GM10248 (cell line): ENCODE measurements at regions of chr5 and their contacts with region 1.

Region 1: GRCh38 chr5:134041570-134042411 is 37.0 kb upstream of the VDAC1 start:
- DNase-seq: peak; percentile 82
- CTCF ChIP-seq: no peak

Region 2: GRCh38 chr5:133977161-133977787 is 64.5 kb before region 1 on chr5:
- CTCF ChIA-PET with region 1: interaction called, 19 read pairs
- POLR2A ChIA-PET with region 1: no interaction called
- DNase-seq: peak; percentile 34
- CTCF ChIP-seq: no peak

Region 3: GRCh38 chr5:134018154-134018985 is 23.4 kb before region 1 on chr5:
- CTCF ChIA-PET with region 1: interaction called, 158 read pairs
- POLR2A ChIA-PET with region 1: no interaction called
- DNase-seq: no peak
- CTCF ChIP-seq: no peak

Region 4: GRCh38 chr5:134063188-134063820 is 21.5 kb after region 1 on chr5:
- CTCF ChIA-PET with region 1: interaction called, 38 read pairs
- POLR2A ChIA-PET with region 1: no interaction called
- DNase-seq: no peak
- CTCF ChIP-seq: no peak

Region 5: DNA sequence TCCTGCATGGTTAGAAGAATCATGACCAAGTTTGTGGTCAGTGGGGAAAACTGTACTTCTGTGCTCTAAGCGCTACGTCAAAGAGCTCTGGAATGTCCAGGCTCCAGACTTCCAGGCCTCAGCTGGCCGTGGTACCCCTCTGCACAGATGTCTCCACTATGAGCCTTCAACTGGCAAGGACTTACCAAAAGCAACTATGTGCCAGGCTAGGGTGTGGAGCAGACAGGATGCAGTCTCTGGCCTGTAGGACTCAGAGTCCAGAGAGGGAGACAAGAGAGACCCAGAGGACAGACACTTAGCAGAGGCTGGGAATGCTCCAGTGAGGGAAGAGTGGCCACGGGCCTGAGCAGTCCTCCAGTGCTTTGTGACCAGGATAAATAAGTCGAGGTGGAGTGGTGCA is 41.7 kb after region 1 on chr5:
- CTCF ChIA-PET with region 1: interaction called, 22 read pairs
- POLR2A ChIA-PET with region 1: no interaction called
- DNase-seq: no peak
- CTCF ChIP-seq: no peak

Region 6: DNA sequence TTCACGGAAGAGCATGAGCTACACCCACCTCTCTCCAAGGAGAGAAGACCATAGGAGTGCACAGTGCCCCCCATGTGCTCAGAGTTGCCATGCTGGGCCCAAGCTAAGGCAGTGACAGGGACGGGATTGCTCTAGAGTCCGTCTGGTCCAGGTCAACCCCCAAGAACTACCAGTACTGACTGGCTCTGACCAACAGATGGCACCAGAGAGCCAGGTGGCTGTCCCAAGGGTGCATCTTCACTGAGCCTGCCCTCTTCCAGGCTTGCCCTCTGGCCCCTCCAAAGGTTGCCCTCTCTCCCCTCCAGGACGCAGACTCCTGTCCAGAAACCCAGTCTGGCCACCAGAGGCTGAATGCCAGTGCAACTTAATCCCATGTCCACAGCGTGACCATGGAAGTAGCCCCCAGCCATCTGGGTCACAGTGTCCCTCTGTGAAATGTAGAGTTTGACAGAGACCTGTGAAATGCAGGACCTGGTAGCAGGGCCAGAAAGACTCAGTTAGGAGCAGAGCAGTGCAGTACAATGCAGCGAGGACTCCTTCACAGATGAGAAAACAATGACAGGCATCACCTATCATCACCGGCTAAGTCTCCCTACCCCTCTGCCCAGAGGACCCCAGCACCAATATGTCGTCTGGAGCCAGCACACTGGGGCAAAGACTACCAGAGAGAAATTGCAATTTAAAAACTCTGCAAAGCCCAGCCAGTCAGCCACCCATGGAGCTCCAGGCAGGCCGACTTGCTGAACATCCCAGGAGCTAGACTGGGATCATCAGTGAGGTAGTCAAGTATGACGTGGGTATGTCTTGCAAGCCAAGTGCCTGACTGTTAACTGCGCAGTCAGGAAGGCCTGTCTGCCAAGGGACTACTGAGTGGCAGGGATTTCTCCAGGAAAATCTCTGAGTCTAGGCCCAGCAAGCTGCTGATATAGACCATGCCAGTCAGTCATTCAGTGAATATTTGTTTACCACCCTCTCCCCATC is 142.7 kb after region 1 on chr5:
- CTCF ChIA-PET with region 1: interaction called, 11 read pairs
- POLR2A ChIA-PET with region 1: no interaction called
- DNase-seq: peak; percentile 84
- CTCF ChIP-seq: peak; percentile 93